CD4-positive, alpha-beta memory T cell (primary cell): ENCODE measurements at regions of chr9 and their contacts with region 1.

Region 1: GRCh38 chr9:89489548-89490530 is 8.1 kb downstream of the SEMA4D start:
- DNase-seq: peak; percentile 71 to 86 (median 83)
- H3K4me3 ChIP-seq: peak overlapping the region; percentile 19 to 20
- H3K4me3 Mint-ChIP-seq: peak overlapping the region; percentile 68 to 100 (median 92)
- H3K27ac ChIP-seq: peak overlapping the region; percentile 72
- H3K27ac Mint-ChIP-seq: peak overlapping the region; percentile 74 to 99 (median 88)
- H3K4me1 ChIP-seq: peaks cover 97% of the 10 kb centered on the region
- H3K4me1 Mint-ChIP-seq: peaks cover 87 to 100% (median 93%) of the 10 kb centered on the region in 4 donors
- H3K27me3 ChIP-seq: no peaks in the 10 kb centered on the region
- H3K27me3 Mint-ChIP-seq: no peaks in the 10 kb centered on the region

Region 2: DNA sequence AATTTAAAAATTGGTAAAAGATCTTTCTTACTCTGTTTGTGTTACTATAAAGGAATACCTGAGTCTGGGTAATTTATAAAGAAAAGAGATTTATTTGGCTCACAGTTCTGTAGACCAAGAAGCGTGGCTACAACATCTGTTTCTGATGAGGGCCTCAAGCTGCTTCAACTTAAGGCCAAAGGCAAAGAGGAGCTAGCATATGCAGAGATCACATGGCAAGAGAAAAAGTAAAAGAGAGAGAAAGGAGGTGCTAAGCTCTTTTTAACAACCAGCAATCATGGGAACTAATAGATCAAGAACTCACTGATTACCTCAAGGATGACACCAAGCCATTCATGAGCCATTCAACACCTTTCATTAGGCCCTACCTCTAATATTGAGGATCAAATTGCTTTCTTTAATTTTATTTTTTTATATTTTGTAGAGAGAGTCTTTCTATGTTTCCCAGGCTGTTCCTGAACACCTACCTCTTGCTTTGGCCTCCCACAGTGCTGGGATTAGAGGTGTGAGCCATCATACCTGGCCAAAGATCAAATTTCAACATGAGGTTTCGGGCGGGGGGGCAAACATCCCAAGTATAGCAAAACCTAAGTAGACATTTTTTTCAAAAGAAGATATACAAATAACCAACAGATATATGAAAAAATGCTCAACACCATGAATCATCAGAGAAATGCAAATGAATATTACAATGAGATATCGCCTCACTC is 295.3 kb before region 1 on chr9:
- CTCF ChIA-PET with region 1: no interaction called
- POLR2A ChIA-PET with region 1: no interaction called
- intact Hi-C with region 1: no loop called
- DNase-seq: no peak
- H3K4me3 ChIP-seq: no peak overlapping the region
- H3K4me3 Mint-ChIP-seq: no peak overlapping the region
- H3K27ac ChIP-seq: no peak overlapping the region
- H3K27ac Mint-ChIP-seq: no peak overlapping the region
- H3K4me1 ChIP-seq: no peaks in the 10 kb centered on the region
- H3K4me1 Mint-ChIP-seq: no peaks in the 10 kb centered on the region
- H3K27me3 ChIP-seq: no peaks in the 10 kb centered on the region
- H3K27me3 Mint-ChIP-seq: peaks cover 9% of the 10 kb centered on the region in 2 donors

Region 3: GRCh38 chr9:89410641-89411350 is 79.0 kb before region 1 on chr9:
- CTCF ChIA-PET with region 1: interaction called, 7 read pairs
- POLR2A ChIA-PET with region 1: interaction called, 16 read pairs
- intact Hi-C with region 1: no loop called
- DNase-seq: peak in 4 of 5 donors; percentile 30 to 76 (median 32)
- H3K4me3 ChIP-seq: no peak overlapping the region
- H3K4me3 Mint-ChIP-seq: peak overlapping the region in 7 of 8 donors; percentile 58 to 84 (median 80)
- H3K27ac ChIP-seq: peak overlapping the region; percentile 52
- H3K27ac Mint-ChIP-seq: peak overlapping the region; percentile 86 to 95 (median 91)
- H3K4me1 ChIP-seq: peaks cover 100% of the 10 kb centered on the region
- H3K4me1 Mint-ChIP-seq: peaks cover 71 to 98% (median 82%) of the 10 kb centered on the region in 4 donors
- H3K27me3 ChIP-seq: no peaks in the 10 kb centered on the region
- H3K27me3 Mint-ChIP-seq: no peaks in the 10 kb centered on the region

Region 4: DNA sequence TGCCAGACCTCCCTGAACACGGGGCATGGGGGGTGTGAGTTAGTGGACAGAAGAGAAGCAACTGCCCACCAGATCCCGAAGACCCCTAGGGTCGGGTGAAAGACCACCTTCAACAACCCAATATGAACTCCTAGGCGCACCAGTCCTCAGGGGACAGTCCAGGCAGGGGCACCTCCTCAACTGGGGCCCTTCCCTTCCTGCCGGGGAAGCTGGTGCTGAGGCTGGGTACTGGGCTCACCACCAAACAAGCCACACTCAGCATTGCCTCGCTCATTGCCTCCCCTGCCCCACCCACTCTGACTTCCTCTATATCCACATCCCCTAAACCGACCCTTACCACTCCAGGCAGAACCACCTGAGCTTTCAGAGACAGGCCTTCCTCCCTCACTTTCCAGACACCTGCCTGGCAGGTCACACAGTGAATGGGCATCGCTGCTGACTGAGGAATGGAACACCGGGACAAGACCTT is 34.4 kb before region 1 on chr9:
- CTCF ChIA-PET with region 1: interaction called, 3 read pairs
- POLR2A ChIA-PET with region 1: interaction called, 609 read pairs
- intact Hi-C with region 1: no loop called
- DNase-seq: peak; percentile 50 to 72 (median 63)
- H3K4me3 ChIP-seq: peak overlapping the region in 1 of 2 donors; percentile 22
- H3K4me3 Mint-ChIP-seq: peak overlapping the region; percentile 72 to 90 (median 82)
- H3K27ac ChIP-seq: peak overlapping the region; percentile 68
- H3K27ac Mint-ChIP-seq: peak overlapping the region; percentile 92 to 98 (median 97)
- H3K4me1 ChIP-seq: peaks cover 97% of the 10 kb centered on the region
- H3K4me1 Mint-ChIP-seq: peaks cover 71 to 98% (median 87%) of the 10 kb centered on the region in 4 donors
- H3K27me3 ChIP-seq: no peaks in the 10 kb centered on the region
- H3K27me3 Mint-ChIP-seq: no peaks in the 10 kb centered on the region

Region 5: GRCh38 chr9:89477811-89478630 is 11.8 kb before region 1 on chr9:
- CTCF ChIA-PET with region 1: interaction called, 23 read pairs
- POLR2A ChIA-PET with region 1: interaction called, 609 read pairs
- intact Hi-C with region 1: loop called (anchors 1 kb)
- DNase-seq: peak; percentile 50 to 80 (median 53)
- H3K4me3 ChIP-seq: peak overlapping the region; percentile 52 to 57
- H3K4me3 Mint-ChIP-seq: peak overlapping the region; percentile 77 to 91 (median 86)
- H3K27ac ChIP-seq: peak overlapping the region; percentile 75
- H3K27ac Mint-ChIP-seq: peak overlapping the region; percentile 85 to 97 (median 96)
- H3K4me1 ChIP-seq: peaks cover 88% of the 10 kb centered on the region
- H3K4me1 Mint-ChIP-seq: peaks cover 72 to 94% (median 85%) of the 10 kb centered on the region in 4 donors
- H3K27me3 ChIP-seq: no peaks in the 10 kb centered on the region
- H3K27me3 Mint-ChIP-seq: no peaks in the 10 kb centered on the region

Region 6: GRCh38 chr9:89529243-89530035 is 39.6 kb after region 1 on chr9:
- CTCF ChIA-PET with region 1: interaction called, 3 read pairs
- POLR2A ChIA-PET with region 1: interaction called, 24 read pairs
- intact Hi-C with region 1: no loop called
- DNase-seq: peak; percentile 36 to 56 (median 40)
- H3K4me3 ChIP-seq: no peak overlapping the region
- H3K4me3 Mint-ChIP-seq: peak overlapping the region; percentile 15 to 89 (median 66)
- H3K27ac ChIP-seq: no peak overlapping the region
- H3K27ac Mint-ChIP-seq: peak overlapping the region; percentile 39 to 92 (median 76)
- H3K4me1 ChIP-seq: peaks cover 98% of the 10 kb centered on the region
- H3K4me1 Mint-ChIP-seq: peaks cover 74 to 100% (median 91%) of the 10 kb centered on the region in 4 donors
- H3K27me3 ChIP-seq: no peaks in the 10 kb centered on the region
- H3K27me3 Mint-ChIP-seq: no peaks in the 10 kb centered on the region